IMR-90 (cell line): ENCODE measurements at regions of chr12 and their contacts with region 1.

Region 1: GRCh38 chr12:103737881-103738280 is 103.2 kb downstream of the NT5DC3 start:
- DNase-seq: no peak
- ATAC-seq: no peak
- H3K4me3 ChIP-seq: no peak overlapping the region
- H3K27ac ChIP-seq: no peak overlapping the region
- H3K4me1 ChIP-seq: no peaks in the 10 kb centered on the region
- H3K27me3 ChIP-seq: peaks cover 3% of the 10 kb centered on the region
- CTCF ChIP-seq: no peak
- POLR2A ChIP-seq: no peak
- RAD21 ChIP-seq: no peak

Region 2: GRCh38 chr12:103441437-103442181 is 296.3 kb before region 1 on chr12:
- CTCF ChIA-PET with region 1: no interaction called
- POLR2A ChIA-PET with region 1: no interaction called
- dilution Hi-C with region 1: no loop called
- in situ Hi-C with region 1: no loop called
- intact Hi-C with region 1: no loop called
- DNase-seq: no peak
- ATAC-seq: no peak
- H3K4me3 ChIP-seq: no peak overlapping the region
- H3K27ac ChIP-seq: no peak overlapping the region
- H3K4me1 ChIP-seq: no peaks in the 10 kb centered on the region
- H3K27me3 ChIP-seq: no peaks in the 10 kb centered on the region
- CTCF ChIP-seq: no peak
- POLR2A ChIP-seq: no peak
- RAD21 ChIP-seq: no peak

Region 3: DNA sequence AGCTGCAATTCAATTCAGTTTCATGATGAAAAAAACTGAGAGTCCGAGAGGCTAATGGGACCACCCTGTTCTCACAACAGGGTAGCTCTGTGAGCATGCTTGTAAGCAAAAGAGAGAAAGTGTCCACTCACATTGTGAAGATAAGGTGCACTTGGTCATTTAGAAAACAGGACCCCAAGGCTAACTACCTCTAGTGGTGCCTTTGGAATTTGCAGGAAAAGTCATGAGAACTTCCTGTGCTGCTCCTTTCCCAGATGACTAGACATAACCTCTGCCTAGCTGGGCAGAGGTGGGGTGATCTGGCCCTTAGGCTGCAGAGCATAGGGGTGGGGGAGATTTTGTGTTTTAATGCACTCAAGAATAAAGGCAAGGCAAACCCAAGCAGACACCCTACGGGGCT is 32.0 kb before region 1 on chr12:
- CTCF ChIA-PET with region 1: no interaction called
- POLR2A ChIA-PET with region 1: no interaction called
- dilution Hi-C with region 1: no loop called
- in situ Hi-C with region 1: no loop called
- intact Hi-C with region 1: no loop called
- DNase-seq: no peak
- ATAC-seq: no peak
- H3K4me3 ChIP-seq: no peak overlapping the region
- H3K27ac ChIP-seq: no peak overlapping the region
- H3K4me1 ChIP-seq: no peaks in the 10 kb centered on the region
- H3K27me3 ChIP-seq: peaks cover 7% of the 10 kb centered on the region
- CTCF ChIP-seq: no peak
- POLR2A ChIP-seq: no peak
- RAD21 ChIP-seq: no peak

Region 4: DNA sequence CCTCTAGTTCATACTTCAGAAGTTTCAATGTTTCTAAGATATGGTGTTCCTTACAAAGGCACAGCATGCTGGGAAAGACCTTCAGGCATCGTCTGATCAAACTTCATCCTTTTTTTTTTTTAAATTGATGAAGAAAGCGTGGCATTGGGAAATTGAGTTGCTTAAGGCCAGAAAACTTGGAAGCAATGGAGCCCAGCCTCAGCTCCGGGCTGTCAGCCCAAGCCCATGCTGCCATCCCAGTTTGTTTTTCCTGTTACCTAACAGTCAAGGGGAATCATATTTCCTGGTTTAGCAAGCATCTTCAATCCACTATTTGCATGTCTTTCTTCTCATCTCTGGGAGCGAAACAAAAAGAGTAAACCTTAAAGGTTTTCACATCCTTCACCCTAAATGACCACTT is 919.0 kb after region 1 on chr12:
- CTCF ChIA-PET with region 1: no interaction called
- POLR2A ChIA-PET with region 1: no interaction called
- dilution Hi-C with region 1: no loop called
- in situ Hi-C with region 1: no loop called
- intact Hi-C with region 1: loop called (anchors 5 kb)
- DNase-seq: peak; percentile 54
- ATAC-seq: no peak
- H3K4me3 ChIP-seq: no peak overlapping the region
- H3K27ac ChIP-seq: no peak overlapping the region
- H3K4me1 ChIP-seq: no peaks in the 10 kb centered on the region
- H3K27me3 ChIP-seq: peaks cover 27% of the 10 kb centered on the region
- CTCF ChIP-seq: no peak
- POLR2A ChIP-seq: no peak
- RAD21 ChIP-seq: no peak

Region 5: DNA sequence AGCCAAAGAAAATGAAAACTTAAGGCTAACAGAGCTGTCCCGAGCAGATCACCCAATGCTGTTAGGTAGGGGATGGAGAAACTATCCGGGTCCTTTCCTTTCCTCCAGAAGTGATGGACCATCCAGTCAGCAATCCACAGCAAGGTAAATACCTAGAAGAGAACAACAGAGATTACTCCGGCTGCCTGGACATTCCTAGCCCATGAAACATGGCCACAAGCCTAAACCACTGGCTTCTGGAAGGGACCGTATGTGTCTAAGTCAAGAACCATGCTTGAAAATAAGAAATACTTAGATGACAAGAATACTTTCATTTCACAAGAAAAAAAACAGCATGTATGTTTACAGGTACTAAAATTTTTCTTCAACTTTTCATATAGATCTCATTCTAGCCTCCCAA is 1067.3 kb after region 1 on chr12:
- CTCF ChIA-PET with region 1: no interaction called
- POLR2A ChIA-PET with region 1: no interaction called
- dilution Hi-C with region 1: no loop called
- in situ Hi-C with region 1: no loop called
- intact Hi-C with region 1: no loop called
- DNase-seq: peak; percentile 64
- ATAC-seq: peak; percentile 61
- H3K4me3 ChIP-seq: no peak overlapping the region
- H3K27ac ChIP-seq: no peak overlapping the region
- H3K4me1 ChIP-seq: no peaks in the 10 kb centered on the region
- H3K27me3 ChIP-seq: peaks cover 3% of the 10 kb centered on the region; the same call in 1 of the 2 replicates
- CTCF ChIP-seq: no peak
- POLR2A ChIP-seq: no peak
- RAD21 ChIP-seq: no peak